OCI-LY7 (cell line): ENCODE measurements at regions of chr16 and their contacts with region 1.

Region 1: GRCh38 chr16:24098896-24099295 is 157.2 kb upstream of the CACNG3 start:
- DNase-seq: no peak
- H3K4me3 ChIP-seq: no peak overlapping the region
- H3K27ac ChIP-seq: no peak overlapping the region
- H3K4me1 ChIP-seq: no peaks in the 10 kb centered on the region
- CTCF ChIP-seq: no peak

Region 2: GRCh38 chr16:24123275-24123674 is 24.4 kb after region 1 on chr16:
- CTCF ChIA-PET with region 1: no interaction called
- POLR2A ChIA-PET with region 1: interaction called, 10 read pairs
- intact Hi-C with region 1: no loop called
- DNase-seq: no peak
- H3K4me3 ChIP-seq: no peak overlapping the region
- H3K27ac ChIP-seq: no peak overlapping the region
- H3K4me1 ChIP-seq: no peaks in the 10 kb centered on the region
- CTCF ChIP-seq: no peak